Activated CD4-positive, alpha-beta T cell treated with anti-CD3 and anti-CD28 coated beads for 36 hours (primary cell): ENCODE measurements at regions of chr18 and their contacts with region 1.

Region 1: DNA sequence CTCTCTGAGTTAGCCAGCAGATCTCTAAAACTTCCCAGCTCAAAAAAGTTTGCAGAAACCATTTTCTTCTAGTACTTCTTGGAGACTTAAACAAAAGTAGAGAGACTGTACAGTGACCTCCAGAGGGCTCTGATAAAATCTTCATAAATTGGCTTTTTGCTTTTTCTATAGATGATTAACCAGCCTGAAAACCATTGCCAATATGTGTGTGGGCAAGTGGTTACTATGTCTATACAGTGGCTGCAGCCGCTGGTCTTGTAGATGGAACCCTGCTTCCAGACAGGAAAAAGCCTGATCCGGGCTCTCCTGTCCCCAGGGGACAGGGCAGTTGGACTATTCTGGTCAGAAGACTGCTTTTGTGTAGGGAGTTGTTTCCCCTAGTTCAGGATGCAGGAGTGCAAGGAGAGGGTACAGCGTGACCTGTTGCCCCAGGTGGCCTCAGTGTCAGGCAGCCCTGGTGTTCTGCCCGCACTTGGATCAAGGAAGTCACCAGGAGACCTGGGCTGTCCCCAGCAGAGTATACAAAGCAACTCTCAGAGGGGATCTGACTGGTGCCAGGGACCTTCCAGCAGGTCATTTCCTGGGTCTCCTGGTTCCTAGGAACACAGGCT is 7.3 kb upstream of the PTPRM start:
- DNase-seq: no peak
- ATAC-seq: no peak
- H3K4me3 Mint-ChIP-seq: no peak overlapping the region
- H3K27ac Mint-ChIP-seq: no peak overlapping the region
- H3K4me1 Mint-ChIP-seq: no peaks in the 10 kb centered on the region
- H3K27me3 Mint-ChIP-seq: peaks cover 18% of the 10 kb centered on the region

Region 2: DNA sequence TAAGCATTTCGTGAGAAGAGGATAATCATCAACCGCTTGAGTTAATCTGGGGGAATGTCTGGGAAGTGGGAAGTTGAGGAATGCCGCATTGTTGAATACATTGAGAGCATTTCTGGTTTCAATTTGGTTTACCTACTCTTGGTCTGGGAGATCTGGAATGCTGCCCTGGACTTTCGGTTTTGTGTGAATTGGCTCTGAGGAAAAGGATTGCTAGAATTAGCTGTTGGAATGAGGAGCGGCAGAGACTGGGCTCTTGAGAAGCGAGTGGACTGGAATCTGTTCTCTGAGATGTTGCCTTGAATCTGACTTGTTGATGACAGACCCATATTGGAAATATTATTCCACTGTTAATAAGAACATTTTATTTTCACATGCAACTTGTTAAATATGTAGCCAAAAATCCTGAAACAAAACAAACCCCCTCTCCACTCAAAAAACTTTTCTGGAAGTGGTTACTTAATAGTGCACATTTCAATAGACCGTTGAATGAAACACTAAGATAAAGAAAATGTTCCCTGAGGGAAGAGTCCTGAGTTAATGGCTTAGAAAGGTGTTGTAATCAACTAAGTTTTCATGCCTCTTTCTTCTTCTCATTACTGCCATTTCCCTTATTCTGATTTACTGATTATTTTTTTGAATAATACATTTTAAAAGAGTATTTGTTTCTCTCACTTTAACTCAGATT is 58.1 kb after region 1 on chr18:
- CTCF ChIA-PET with region 1: no interaction called
- POLR2A ChIA-PET with region 1: no interaction called
- intact Hi-C with region 1: loop called in 1 of 2 experiments (anchors 10 kb)
- DNase-seq: no peak
- ATAC-seq: no peak
- H3K4me3 Mint-ChIP-seq: no peak overlapping the region
- H3K27ac Mint-ChIP-seq: no peak overlapping the region
- H3K4me1 Mint-ChIP-seq: no peaks in the 10 kb centered on the region
- H3K27me3 Mint-ChIP-seq: no peaks in the 10 kb centered on the region